HCT116 (cell line): ENCODE measurements at regions of chr22 and their contacts with region 1.

Region 1: DNA sequence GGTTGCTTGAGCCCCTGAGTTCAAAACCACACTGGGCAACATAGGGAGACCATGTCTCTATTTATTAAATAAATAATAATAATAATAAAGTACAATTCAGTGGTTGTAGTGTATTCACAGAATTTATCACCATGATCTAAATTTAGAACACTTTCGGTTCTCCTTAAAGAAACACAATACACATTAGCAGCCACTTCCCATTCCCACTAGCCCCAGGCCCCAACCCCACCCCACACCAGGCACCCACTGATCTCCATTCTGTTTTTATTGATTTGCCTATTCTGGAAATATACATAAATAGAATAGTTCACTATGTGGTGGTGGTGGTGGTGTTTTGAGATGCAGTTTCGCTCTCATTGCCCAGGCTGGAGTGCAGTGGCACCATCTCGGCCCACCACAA is 45.7 kb downstream of the BCL2L13 start:
- DNase-seq: no peak
- ATAC-seq: no peak
- H3K4me3 ChIP-seq: no peak overlapping the region
- H3K27ac ChIP-seq: no peak overlapping the region
- H3K4me1 ChIP-seq: no peaks in the 10 kb centered on the region
- H3K27me3 ChIP-seq: no peaks in the 10 kb centered on the region
- CTCF ChIP-seq: no peak
- POLR2A ChIP-seq: no peak
- RAD21 ChIP-seq: no peak

Region 2: GRCh38 chr22:17606496-17606895 is 77.7 kb before region 1 on chr22:
- CTCF ChIA-PET with region 1: no interaction called
- POLR2A ChIA-PET with region 1: no interaction called
- RAD21 ChIA-PET with region 1: no interaction called
- intact Hi-C with region 1: loop called (anchors 10 kb)
- DNase-seq: no peak
- ATAC-seq: no peak
- H3K4me3 ChIP-seq: no peak overlapping the region
- H3K27ac ChIP-seq: no peak overlapping the region
- H3K4me1 ChIP-seq: no peaks in the 10 kb centered on the region
- H3K27me3 ChIP-seq: no peaks in the 10 kb centered on the region
- CTCF ChIP-seq: no peak
- POLR2A ChIP-seq: no peak
- RAD21 ChIP-seq: no peak

Region 3: DNA sequence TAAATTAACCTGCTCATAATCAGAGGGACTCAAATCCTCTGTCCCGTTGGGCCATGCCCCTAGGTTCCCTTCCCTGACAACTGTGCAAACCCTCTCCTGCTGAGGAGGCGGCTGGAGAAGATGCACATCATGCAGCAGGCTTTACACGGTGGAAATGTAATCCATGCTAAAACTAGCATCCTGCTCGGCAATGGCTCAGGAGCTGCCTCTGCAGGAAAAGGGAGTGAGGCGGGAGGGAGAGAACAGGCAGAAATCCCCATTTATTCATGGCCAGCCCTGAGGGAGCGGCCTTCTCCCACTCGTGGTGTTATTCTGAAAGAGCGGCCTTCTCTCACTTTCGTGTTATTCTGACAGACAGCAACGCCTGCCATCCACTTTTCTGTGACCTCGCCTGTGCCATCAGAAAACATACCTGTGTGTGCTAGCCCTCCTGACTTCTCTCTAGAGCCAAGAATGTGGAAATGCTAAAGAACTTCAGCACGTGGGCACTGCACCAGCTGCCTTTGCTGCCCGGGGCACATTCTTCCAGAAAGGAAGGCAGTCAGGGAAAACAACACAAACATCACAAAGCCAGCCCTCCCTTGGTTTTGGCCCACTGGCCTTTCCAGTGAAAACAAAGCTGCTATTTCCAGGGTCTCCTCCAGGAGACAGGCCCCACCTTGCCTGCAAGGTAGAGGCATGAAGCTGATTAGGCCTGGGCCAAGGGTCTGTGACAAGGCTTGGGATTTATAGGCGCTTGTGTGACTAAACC is 152.9 kb after region 1 on chr22:
- CTCF ChIA-PET with region 1: no interaction called
- POLR2A ChIA-PET with region 1: no interaction called
- RAD21 ChIA-PET with region 1: no interaction called
- intact Hi-C with region 1: no loop called
- DNase-seq: no peak
- ATAC-seq: no peak
- H3K4me3 ChIP-seq: no peak overlapping the region
- H3K27ac ChIP-seq: no peak overlapping the region
- H3K4me1 ChIP-seq: no peaks in the 10 kb centered on the region
- H3K27me3 ChIP-seq: no peaks in the 10 kb centered on the region
- CTCF ChIP-seq: no peak
- POLR2A ChIP-seq: no peak
- RAD21 ChIP-seq: no peak

Region 4: GRCh38 chr22:18044548-18045271 is 360.5 kb after region 1 on chr22:
- CTCF ChIA-PET with region 1: no interaction called
- POLR2A ChIA-PET with region 1: no interaction called
- RAD21 ChIA-PET with region 1: no interaction called
- intact Hi-C with region 1: no loop called
- DNase-seq: no peak
- ATAC-seq: no peak
- H3K4me3 ChIP-seq: no peak overlapping the region
- H3K27ac ChIP-seq: no peak overlapping the region
- H3K4me1 ChIP-seq: no peaks in the 10 kb centered on the region
- H3K27me3 ChIP-seq: no peaks in the 10 kb centered on the region
- CTCF ChIP-seq: no peak
- POLR2A ChIP-seq: no peak
- RAD21 ChIP-seq: no peak